H1 (cell line): ENCODE measurements at regions of chr3 and their contacts with region 1.

Region 1: DNA sequence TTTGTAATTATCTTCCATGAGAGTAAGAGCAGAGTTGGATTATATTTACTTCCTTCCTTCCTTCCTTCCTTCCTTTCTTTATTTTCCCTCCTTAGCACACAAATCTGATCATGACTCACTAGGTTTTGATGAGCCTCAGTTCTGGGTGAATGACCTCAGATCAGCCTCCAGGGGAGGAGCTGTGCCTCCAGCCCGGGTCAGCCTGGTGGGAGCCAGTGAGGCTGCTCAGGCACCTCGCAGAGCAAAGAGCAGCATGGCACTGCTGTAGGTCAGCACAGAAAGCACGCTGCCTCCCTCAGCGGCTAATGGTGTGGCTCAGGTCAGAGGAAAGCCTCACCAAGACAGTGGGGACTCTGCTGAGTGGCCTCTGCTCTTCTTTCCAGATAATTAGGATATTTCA is 108.4 kb downstream of the SYNPR start:
- DNase-seq: no peak
- H3K4me3 ChIP-seq: no peak overlapping the region
- H3K27ac ChIP-seq: no peak overlapping the region
- H3K4me1 ChIP-seq: no peaks in the 10 kb centered on the region
- H3K27me3 ChIP-seq: no peaks in the 10 kb centered on the region
- CTCF ChIP-seq: peak in 2 of 3 experiments; percentile 17; a peak in 2 of 4 replicates
- EP300 ChIP-seq: no peak
- POLR2A ChIP-seq: no peak
- RAD21 ChIP-seq: peak in 1 of 2 experiments; percentile 31; a peak in 2 of 4 replicates

Region 2: DNA sequence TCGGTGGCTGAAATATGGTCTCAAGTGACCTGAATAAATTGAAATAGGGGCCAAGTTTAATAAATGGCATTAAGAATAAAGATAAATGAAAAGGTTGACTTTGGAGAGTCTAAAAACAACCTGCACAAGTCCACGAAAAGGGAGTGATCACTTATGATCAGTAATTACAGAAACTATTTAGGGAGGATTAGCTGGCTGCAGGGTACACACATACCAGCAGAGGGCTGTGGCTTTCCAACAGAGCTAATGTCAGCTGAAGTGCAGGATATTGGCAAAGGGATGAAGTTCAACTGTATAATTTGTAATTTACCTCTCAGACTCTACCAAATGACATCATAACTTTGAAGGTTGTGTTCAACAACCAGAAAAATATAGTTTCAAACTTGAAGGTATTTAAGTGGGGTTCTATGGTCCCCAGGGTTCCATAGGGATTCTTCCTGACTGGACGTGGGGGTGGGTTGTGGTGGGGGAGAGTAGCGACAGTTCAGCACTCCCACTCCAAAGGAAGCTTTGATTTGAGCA is 21.6 kb before region 1 on chr3:
- CTCF ChIA-PET with region 1: interaction called, 12 read pairs
- POLR2A ChIA-PET with region 1: no interaction called
- DNase-seq: no peak
- H3K4me3 ChIP-seq: no peak overlapping the region
- H3K27ac ChIP-seq: no peak overlapping the region
- H3K4me1 ChIP-seq: no peaks in the 10 kb centered on the region
- H3K27me3 ChIP-seq: no peaks in the 10 kb centered on the region
- CTCF ChIP-seq: peak; percentile 31 to 84 (median 70)
- EP300 ChIP-seq: no peak
- POLR2A ChIP-seq: no peak
- RAD21 ChIP-seq: peak; percentile 72 to 81

Region 3: GRCh38 chr3:63482341-63482740 is 95.8 kb after region 1 on chr3:
- CTCF ChIA-PET with region 1: no interaction called
- POLR2A ChIA-PET with region 1: no interaction called
- DNase-seq: no peak
- H3K4me3 ChIP-seq: no peak overlapping the region
- H3K27ac ChIP-seq: no peak overlapping the region
- H3K4me1 ChIP-seq: no peaks in the 10 kb centered on the region
- H3K27me3 ChIP-seq: no peaks in the 10 kb centered on the region
- CTCF ChIP-seq: no peak
- EP300 ChIP-seq: no peak
- POLR2A ChIP-seq: no peak
- RAD21 ChIP-seq: no peak